Gastrocnemius medialis (tissue), 4 donors: ENCODE measurements at regions of chr15 and their contacts with region 1.

Region 1: GRCh38 chr15:67839929-67840748 is at the start of gene RNU6-1:
- DNase-seq: peak; percentile 90 to 96
- ATAC-seq: peak; percentile 88 to 94
- H3K4me3 ChIP-seq: peak within 1 kb of the TSS; percentile 94 to 99 (median 96)
- H3K27ac ChIP-seq: peak within 1 kb of the TSS; percentile 97 to 100 (median 99)
- H3K4me1 ChIP-seq: peaks cover 20 to 28% of the 10 kb centered on the region in 2 donors
- H3K27me3 ChIP-seq: no peaks in the 10 kb centered on the region
- CTCF ChIP-seq: peak in 1 of 5 experiments; percentile 31
- POLR2A ChIP-seq: peak; percentile 90 to 95
- total RNA-seq, gene RNU6-1: not detected

Region 2: DNA sequence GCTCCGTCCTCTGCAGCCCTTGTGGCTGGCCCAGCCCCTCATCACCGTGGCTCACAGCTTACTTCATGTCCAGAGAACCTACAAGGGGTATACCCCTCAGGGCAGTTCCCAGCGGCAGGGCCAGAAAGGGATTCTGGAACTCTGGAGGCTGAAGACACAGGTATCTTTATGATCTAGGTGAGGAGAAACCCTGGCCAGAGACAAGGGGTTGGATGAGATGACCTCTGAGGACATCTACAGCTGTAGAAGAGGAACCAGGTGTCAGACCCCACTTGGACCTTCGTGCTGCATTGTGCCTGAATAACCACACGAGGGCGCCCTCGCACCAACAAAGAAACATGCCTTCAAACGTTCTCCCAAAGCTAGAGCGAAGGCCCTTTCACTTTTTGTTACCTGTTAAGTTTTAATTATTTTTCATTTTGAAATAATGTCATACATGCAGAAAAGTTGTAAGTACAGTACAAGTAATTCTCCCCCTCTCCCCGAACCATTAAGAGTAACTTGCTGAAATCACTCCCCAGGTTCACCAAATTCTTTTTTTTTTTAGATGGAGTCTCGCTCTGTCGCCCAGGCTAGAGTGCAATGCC is 893.5 kb before region 1 on chr15:
- in situ Hi-C with region 1: loop called in 2 of 4 experiments (anchors 10 to 25 kb)
- intact Hi-C with region 1: loop called (anchors 5 kb)
- DNase-seq: peak; percentile 39 to 62
- ATAC-seq: peak; percentile 75 to 78
- H3K4me3 ChIP-seq: no peak overlapping the region
- H3K27ac ChIP-seq: no peak overlapping the region
- H3K4me1 ChIP-seq: no peaks in the 10 kb centered on the region
- H3K27me3 ChIP-seq: no peaks in the 10 kb centered on the region
- CTCF ChIP-seq: peak; percentile 88 to 95 (median 93)
- POLR2A ChIP-seq: no peak

Region 3: GRCh38 chr15:67456677-67457529 is 383.2 kb before region 1 on chr15:
- in situ Hi-C with region 1: loop called (anchors 5 to 10 kb)
- intact Hi-C with region 1: no loop called
- DNase-seq: peak; percentile 47 to 60
- ATAC-seq: peak; percentile 45 to 73
- H3K4me3 ChIP-seq: no peak overlapping the region
- H3K27ac ChIP-seq: no peak overlapping the region
- H3K4me1 ChIP-seq: no peaks in the 10 kb centered on the region
- H3K27me3 ChIP-seq: no peaks in the 10 kb centered on the region
- CTCF ChIP-seq: peak; percentile 42 to 82 (median 69)
- POLR2A ChIP-seq: no peak

Region 4: GRCh38 chr15:67468416-67468815 is 371.7 kb before region 1 on chr15:
- in situ Hi-C with region 1: loop called in 2 of 4 experiments (anchors 10 kb)
- intact Hi-C with region 1: no loop called
- DNase-seq: no peak
- ATAC-seq: no peak
- H3K4me3 ChIP-seq: no peak overlapping the region
- H3K27ac ChIP-seq: no peak overlapping the region
- H3K4me1 ChIP-seq: no peaks in the 10 kb centered on the region
- H3K27me3 ChIP-seq: no peaks in the 10 kb centered on the region
- CTCF ChIP-seq: no peak
- POLR2A ChIP-seq: no peak

Region 5: GRCh38 chr15:67501177-67501835 is 338.8 kb before region 1 on chr15:
- in situ Hi-C with region 1: no loop called
- intact Hi-C with region 1: loop called (anchors 2 kb)
- DNase-seq: no peak
- ATAC-seq: peak in 1 of 2 donors; percentile 68
- H3K4me3 ChIP-seq: no peak overlapping the region
- H3K27ac ChIP-seq: peak overlapping the region in 1 of 4 donors; percentile 10
- H3K4me1 ChIP-seq: no peaks in the 10 kb centered on the region
- H3K27me3 ChIP-seq: no peaks in the 10 kb centered on the region
- CTCF ChIP-seq: peak in 2 of 5 experiments; percentile 22 to 33
- POLR2A ChIP-seq: no peak

Region 6: GRCh38 chr15:67521029-67521811 is 318.9 kb before region 1 on chr15 and contains the start of gene C15orf61:
- in situ Hi-C with region 1: loop called in 2 of 4 experiments (anchors 5 to 25 kb)
- intact Hi-C with region 1: loop called (anchors 1 kb)
- DNase-seq: peak; percentile 90 to 94
- ATAC-seq: peak; percentile 75 to 77
- H3K4me3 ChIP-seq: peak within 1 kb of the TSS; percentile 83 to 94 (median 91)
- H3K27ac ChIP-seq: peak within 1 kb of the TSS; percentile 99 to 100 (median 99)
- H3K4me1 ChIP-seq: peaks cover 28 to 42% of the 10 kb centered on the region in 2 donors
- H3K27me3 ChIP-seq: no peaks in the 10 kb centered on the region
- CTCF ChIP-seq: no peak
- POLR2A ChIP-seq: peak; percentile 95 to 97
- total RNA-seq, gene C15orf61: 10.2 to 25.9 (median 15.8) TPM

Region 7: DNA sequence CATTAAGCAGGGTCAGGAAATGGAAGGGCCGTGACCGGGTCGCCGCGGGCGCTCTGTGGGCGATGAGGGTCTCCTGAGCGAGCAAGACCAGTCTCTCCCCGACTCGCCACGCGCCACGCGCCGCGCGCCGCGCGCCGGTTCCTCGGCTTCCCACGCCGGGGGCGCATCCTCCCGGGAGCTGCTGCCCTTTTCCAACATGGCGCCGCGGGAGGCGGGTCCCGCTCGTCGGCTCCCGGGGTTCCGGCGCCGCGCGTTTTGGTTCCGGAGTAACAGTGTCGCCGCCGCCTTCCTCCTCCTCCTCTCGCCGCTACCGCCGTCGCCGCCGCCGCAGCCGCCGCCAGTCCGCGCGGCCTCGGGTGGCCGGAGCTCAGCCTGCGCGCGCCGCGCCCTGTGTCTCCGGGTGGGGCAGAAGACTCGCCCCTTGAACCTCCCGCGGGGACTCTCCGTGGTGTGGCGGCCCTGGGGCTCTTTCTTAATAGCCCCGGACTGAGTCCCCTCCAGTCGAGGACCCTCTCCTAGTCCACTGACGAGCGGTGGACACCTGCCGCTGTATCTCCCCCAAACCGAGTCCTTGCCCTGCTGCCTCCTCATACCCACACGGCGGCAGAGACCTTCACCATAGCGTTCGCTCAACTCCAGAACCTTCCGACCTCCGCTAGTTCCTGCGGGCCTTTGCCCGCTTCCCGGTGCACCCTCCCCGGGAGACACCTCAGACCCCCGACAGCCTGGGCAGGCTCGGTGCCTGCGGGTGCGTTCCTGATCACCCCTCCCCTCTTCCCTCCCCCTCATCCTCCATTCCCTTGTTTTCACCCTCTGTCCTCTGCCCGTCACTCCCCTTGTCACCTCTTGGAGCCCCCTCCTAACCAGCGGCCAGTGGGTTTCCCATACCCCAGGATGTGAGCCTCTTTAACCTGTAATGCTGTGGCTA is 297.5 kb before region 1 on chr15 and contains the start of gene MAP2K5:
- in situ Hi-C with region 1: loop called in 1 of 4 experiments (anchors 25 kb)
- intact Hi-C with region 1: loop called (anchors 5 kb)
- DNase-seq: peak; percentile 74 to 79
- ATAC-seq: peak; percentile 86 to 89
- H3K4me3 ChIP-seq: peak within 1 kb of the TSS; percentile 66 to 90 (median 78)
- H3K27ac ChIP-seq: peak within 1 kb of the TSS; percentile 86 to 93 (median 88)
- H3K4me1 ChIP-seq: peaks cover 10 to 19% of the 10 kb centered on the region in 2 donors
- H3K27me3 ChIP-seq: no peaks in the 10 kb centered on the region
- CTCF ChIP-seq: no peak
- POLR2A ChIP-seq: peak; percentile 78 to 79
- total RNA-seq, gene MAP2K5: 5.9 to 6.8 (median 6.4) TPM

Region 8: GRCh38 chr15:67731112-67731761 is 108.9 kb before region 1 on chr15:
- in situ Hi-C with region 1: no loop called
- intact Hi-C with region 1: no loop called
- DNase-seq: no peak
- ATAC-seq: no peak
- H3K4me3 ChIP-seq: no peak overlapping the region
- H3K27ac ChIP-seq: no peak overlapping the region
- H3K4me1 ChIP-seq: no peaks in the 10 kb centered on the region
- H3K27me3 ChIP-seq: no peaks in the 10 kb centered on the region
- CTCF ChIP-seq: no peak
- POLR2A ChIP-seq: no peak

Region 9: GRCh38 chr15:67776600-67776999 is 63.5 kb before region 1 on chr15:
- in situ Hi-C with region 1: no loop called
- intact Hi-C with region 1: no loop called
- DNase-seq: no peak
- ATAC-seq: no peak
- H3K4me3 ChIP-seq: no peak overlapping the region
- H3K27ac ChIP-seq: no peak overlapping the region
- H3K4me1 ChIP-seq: no peaks in the 10 kb centered on the region
- H3K27me3 ChIP-seq: no peaks in the 10 kb centered on the region
- CTCF ChIP-seq: no peak
- POLR2A ChIP-seq: no peak

Region 10: DNA sequence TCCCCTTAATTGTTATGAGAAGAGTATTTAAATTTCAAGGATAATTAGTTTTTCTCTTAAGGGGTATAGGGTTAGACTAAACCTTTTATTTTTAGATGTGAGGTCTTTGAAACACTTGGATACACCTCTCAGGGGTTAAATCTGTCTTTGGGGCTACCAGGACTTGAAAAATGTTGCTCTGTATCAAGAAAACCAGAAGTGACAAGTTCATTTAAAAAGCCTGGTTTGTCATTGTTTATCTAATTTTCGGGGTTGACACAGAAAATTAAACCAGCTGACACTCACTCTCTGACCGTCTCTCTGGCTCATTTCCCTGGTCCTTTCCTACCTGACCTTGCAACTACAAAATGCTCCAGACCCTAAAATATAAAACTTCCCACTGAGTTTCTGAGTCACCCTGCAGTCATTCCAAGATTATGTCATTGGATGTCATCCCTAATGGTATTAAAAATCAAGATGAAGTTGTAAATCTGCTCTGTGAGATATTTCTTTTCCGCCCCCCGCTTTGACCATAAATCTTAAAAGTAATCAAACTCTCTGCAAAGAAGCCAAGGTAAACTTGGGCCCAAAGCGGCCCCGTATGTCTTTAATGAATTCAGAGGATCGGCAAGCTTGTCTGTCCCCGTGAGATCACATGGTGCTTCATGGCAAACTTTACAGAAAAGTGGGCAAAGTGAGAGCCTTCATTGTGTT is 47.7 kb before region 1 on chr15:
- in situ Hi-C with region 1: no loop called
- intact Hi-C with region 1: no loop called
- DNase-seq: no peak
- ATAC-seq: no peak
- H3K4me3 ChIP-seq: no peak overlapping the region
- H3K27ac ChIP-seq: no peak overlapping the region
- H3K4me1 ChIP-seq: no peaks in the 10 kb centered on the region
- H3K27me3 ChIP-seq: no peaks in the 10 kb centered on the region
- CTCF ChIP-seq: no peak
- POLR2A ChIP-seq: no peak

Region 11: DNA sequence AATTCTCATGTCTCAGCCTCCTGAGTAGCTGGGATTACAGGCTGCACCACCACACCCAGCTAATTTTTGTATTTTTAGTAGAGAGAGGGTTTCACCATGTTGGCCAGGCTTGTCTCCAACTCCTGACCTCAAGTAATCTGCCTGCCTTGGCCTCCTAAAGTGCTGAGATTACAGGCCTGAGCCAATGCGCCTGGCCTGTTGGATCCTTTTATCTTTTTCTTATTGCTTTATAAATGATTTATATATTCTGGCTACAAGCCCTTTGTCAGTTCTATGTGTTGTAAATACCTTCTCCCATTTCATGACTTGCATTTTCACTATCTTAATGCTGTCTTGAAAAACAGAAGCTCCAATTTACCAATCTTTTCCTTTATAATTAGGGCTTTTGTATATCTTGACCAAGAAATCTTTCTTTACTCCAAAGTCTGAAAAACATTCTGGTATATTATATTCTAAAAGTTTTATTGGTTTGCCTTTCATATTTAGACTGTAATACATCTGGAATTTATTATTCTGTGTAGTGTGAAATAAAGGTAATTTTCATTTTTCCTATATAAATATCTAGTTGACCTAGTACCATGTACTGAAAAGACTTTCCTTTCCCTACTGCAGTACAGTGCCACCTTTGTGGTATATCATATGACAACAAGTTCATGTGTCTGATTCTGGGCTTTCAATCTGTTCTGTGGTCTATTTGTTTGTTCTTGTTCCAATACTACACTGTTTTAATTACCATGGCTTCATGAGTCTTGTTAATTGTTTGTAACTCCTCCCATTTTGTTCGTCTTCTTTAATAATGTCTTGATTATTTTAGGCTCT is 52.6 kb after region 1 on chr15:
- in situ Hi-C with region 1: no loop called
- intact Hi-C with region 1: no loop called
- DNase-seq: peak; percentile 18 to 69
- ATAC-seq: peak; percentile 86 to 89
- H3K4me3 ChIP-seq: no peak overlapping the region
- H3K27ac ChIP-seq: peak overlapping the region in 3 of 4 donors; percentile 15 to 78 (median 50)
- H3K4me1 ChIP-seq: peaks cover 3 to 17% of the 10 kb centered on the region in 2 donors
- H3K27me3 ChIP-seq: no peaks in the 10 kb centered on the region
- CTCF ChIP-seq: no peak
- POLR2A ChIP-seq: no peak